Natural killer cell (primary cell): ENCODE measurements at regions of chr16 and their contacts with region 1.

Region 1: DNA sequence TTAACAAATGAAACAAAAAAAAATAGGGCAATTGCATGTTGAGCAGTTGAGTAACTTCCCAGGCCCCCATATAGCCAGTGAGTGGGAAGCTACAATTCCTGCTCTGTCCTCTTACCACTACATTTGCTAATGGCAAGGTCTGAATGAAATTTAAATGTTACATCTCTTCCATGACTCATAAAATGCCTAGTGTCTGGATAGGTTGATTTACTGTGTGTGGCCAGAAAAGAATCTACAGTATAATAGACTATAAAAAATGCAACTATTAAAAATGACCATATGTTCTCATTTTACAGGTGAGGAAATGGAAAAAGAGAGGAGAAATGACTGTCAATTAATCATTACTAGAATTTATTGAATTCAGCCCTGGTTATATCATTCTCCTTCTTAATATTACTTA is 1199.3 kb downstream of the CDH11 start:
- DNase-seq: no peak
- ATAC-seq: no peak
- H3K4me3 ChIP-seq: no peak overlapping the region
- H3K4me3 Mint-ChIP-seq: no peak overlapping the region
- H3K27ac ChIP-seq: no peak overlapping the region
- H3K27ac Mint-ChIP-seq: no peak overlapping the region
- H3K4me1 ChIP-seq: no peaks in the 10 kb centered on the region
- H3K4me1 Mint-ChIP-seq: no peaks in the 10 kb centered on the region
- H3K27me3 ChIP-seq: no peaks in the 10 kb centered on the region
- H3K27me3 Mint-ChIP-seq: no peaks in the 10 kb centered on the region
- CTCF ChIP-seq: no peak

Region 2: DNA sequence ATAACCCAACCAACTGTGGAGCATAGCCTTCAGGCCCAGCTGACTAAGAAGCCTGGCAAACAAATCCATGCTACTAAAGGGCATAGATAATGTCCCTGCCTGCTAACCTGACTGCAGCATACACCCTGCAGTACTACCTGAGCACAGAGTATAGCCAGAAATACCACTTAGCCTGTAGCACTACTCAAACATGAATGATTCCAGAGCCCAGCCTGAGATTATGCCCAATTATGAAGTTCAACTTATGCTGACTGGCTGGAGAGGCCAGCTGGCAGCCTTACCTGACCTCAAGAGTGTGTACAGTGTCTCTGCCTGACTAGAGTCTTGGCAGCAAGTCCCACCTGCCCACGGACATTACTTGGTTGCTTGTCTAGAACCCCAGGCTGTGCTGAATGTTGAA is 66.0 kb before region 1 on chr16:
- intact Hi-C with region 1: loop called (anchors 10 kb)
- DNase-seq: no peak
- ATAC-seq: no peak
- H3K4me3 ChIP-seq: no peak overlapping the region
- H3K4me3 Mint-ChIP-seq: no peak overlapping the region
- H3K27ac ChIP-seq: no peak overlapping the region
- H3K27ac Mint-ChIP-seq: no peak overlapping the region
- H3K4me1 ChIP-seq: no peaks in the 10 kb centered on the region
- H3K4me1 Mint-ChIP-seq: no peaks in the 10 kb centered on the region
- H3K27me3 ChIP-seq: no peaks in the 10 kb centered on the region
- H3K27me3 Mint-ChIP-seq: no peaks in the 10 kb centered on the region
- CTCF ChIP-seq: no peak

Region 3: GRCh38 chr16:64109241-64109640 is 186.7 kb after region 1 on chr16:
- intact Hi-C with region 1: no loop called
- DNase-seq: no peak
- ATAC-seq: no peak
- H3K4me3 ChIP-seq: no peak overlapping the region
- H3K4me3 Mint-ChIP-seq: no peak overlapping the region
- H3K27ac ChIP-seq: no peak overlapping the region
- H3K27ac Mint-ChIP-seq: no peak overlapping the region
- H3K4me1 ChIP-seq: no peaks in the 10 kb centered on the region
- H3K4me1 Mint-ChIP-seq: no peaks in the 10 kb centered on the region
- H3K27me3 ChIP-seq: no peaks in the 10 kb centered on the region
- H3K27me3 Mint-ChIP-seq: no peaks in the 10 kb centered on the region
- CTCF ChIP-seq: no peak